Naive thymus-derived CD4-positive, alpha-beta T cell (primary cell): ENCODE measurements at regions of chr7 and their contacts with region 1.

Region 1: GRCh38 chr7:39623018-39623731 is at the start of gene RALA:
- DNase-seq: peak; percentile 78 to 90 (median 86)
- ATAC-seq: peak; percentile 96
- H3K4me3 ChIP-seq: peak within 1 kb of the TSS; percentile 77
- H3K4me3 Mint-ChIP-seq: peak within 1 kb of the TSS; percentile 88 to 98 (median 94)
- H3K27ac ChIP-seq: peak within 1 kb of the TSS; percentile 82
- H3K27ac Mint-ChIP-seq: peak within 1 kb of the TSS; percentile 91 to 98 (median 97)
- H3K4me1 ChIP-seq: peaks cover 22 to 26% of the 10 kb centered on the region in 2 donors
- H3K4me1 Mint-ChIP-seq: peaks cover 39 to 55% (median 52%) of the 10 kb centered on the region in 7 donors
- H3K27me3 ChIP-seq: no peaks in the 10 kb centered on the region
- H3K27me3 Mint-ChIP-seq: peaks cover 0 to 6% (median 0%) of the 10 kb centered on the region in 5 donors
- total RNA-seq, gene RALA: 24.8 to 48.2 (median 32.8) TPM

Region 2: GRCh38 chr7:37901236-37901827 is 1721.8 kb before region 1 on chr7:
- CTCF ChIA-PET with region 1: no interaction called
- POLR2A ChIA-PET with region 1: no interaction called
- intact Hi-C with region 1: no loop called
- DNase-seq: no peak
- ATAC-seq: no peak
- H3K4me3 ChIP-seq: no peak overlapping the region
- H3K4me3 Mint-ChIP-seq: no peak overlapping the region
- H3K27ac ChIP-seq: no peak overlapping the region
- H3K27ac Mint-ChIP-seq: no peak overlapping the region
- H3K4me1 ChIP-seq: no peaks in the 10 kb centered on the region
- H3K4me1 Mint-ChIP-seq: no peaks in the 10 kb centered on the region
- H3K27me3 ChIP-seq: no peaks in the 10 kb centered on the region
- H3K27me3 Mint-ChIP-seq: peaks cover 5 to 17% (median 9%) of the 10 kb centered on the region in 5 donors

Region 3: DNA sequence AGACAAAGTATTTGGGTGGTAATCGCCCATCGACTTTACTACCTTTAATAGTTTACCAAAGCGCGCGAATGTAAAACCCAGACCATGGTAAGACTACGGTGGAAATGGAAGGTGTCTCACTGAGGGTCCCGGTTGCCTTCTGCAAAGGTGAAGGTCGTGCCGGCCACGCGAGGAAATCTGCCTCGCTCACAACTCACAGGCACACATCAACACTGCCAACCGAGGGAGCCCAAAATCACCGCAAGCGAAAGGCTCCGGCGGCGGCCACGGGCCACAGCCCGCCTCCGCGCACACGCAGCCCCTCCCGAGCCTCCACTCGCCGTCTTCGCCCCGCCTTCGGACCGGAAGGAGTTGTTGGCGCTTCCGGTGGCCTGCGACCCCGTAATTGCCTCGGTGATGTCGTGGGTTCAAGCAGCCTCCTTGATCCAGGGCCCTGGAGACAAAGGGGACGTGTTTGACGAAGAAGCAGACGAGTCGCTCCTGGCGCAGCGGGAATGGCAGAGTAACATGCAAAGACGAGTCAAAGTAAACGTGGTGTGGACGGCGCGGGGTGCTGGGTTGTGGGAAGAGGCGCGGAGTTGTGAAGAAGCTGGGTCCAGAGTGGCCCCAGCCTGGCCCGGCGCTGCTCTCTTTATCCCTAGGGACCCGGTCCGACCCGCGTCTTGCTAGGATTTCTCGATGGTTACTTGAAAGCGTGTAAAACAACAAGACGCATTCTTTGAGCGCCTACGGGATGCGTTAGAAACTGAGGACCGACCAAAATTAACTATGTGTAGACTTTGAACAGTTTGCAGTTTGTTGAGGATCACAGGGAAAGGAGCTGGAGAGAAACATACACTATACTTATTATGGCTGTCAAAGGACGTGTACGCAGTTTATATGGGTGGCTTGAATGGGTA is 56.9 kb before region 1 on chr7 and contains the start of gene YAE1:
- CTCF ChIA-PET with region 1: no interaction called
- POLR2A ChIA-PET with region 1: no interaction called
- intact Hi-C with region 1: loop called (anchors 1 kb)
- DNase-seq: peak; percentile 63 to 81 (median 75)
- ATAC-seq: peak; percentile 95
- H3K4me3 ChIP-seq: peak within 1 kb of the TSS; percentile 88
- H3K4me3 Mint-ChIP-seq: peak within 1 kb of the TSS; percentile 98 to 100 (median 99)
- H3K27ac ChIP-seq: peak within 1 kb of the TSS; percentile 81
- H3K27ac Mint-ChIP-seq: peak within 1 kb of the TSS; percentile 93 to 99 (median 96)
- H3K4me1 ChIP-seq: peaks cover 7 to 11% of the 10 kb centered on the region in 2 donors
- H3K4me1 Mint-ChIP-seq: peaks cover 13 to 50% (median 25%) of the 10 kb centered on the region in 7 donors
- H3K27me3 ChIP-seq: no peaks in the 10 kb centered on the region
- H3K27me3 Mint-ChIP-seq: peaks cover 0 to 15% (median 0%) of the 10 kb centered on the region in 5 donors
- total RNA-seq, gene YAE1: 10.2 to 34.2 (median 15.3) TPM

Region 4: DNA sequence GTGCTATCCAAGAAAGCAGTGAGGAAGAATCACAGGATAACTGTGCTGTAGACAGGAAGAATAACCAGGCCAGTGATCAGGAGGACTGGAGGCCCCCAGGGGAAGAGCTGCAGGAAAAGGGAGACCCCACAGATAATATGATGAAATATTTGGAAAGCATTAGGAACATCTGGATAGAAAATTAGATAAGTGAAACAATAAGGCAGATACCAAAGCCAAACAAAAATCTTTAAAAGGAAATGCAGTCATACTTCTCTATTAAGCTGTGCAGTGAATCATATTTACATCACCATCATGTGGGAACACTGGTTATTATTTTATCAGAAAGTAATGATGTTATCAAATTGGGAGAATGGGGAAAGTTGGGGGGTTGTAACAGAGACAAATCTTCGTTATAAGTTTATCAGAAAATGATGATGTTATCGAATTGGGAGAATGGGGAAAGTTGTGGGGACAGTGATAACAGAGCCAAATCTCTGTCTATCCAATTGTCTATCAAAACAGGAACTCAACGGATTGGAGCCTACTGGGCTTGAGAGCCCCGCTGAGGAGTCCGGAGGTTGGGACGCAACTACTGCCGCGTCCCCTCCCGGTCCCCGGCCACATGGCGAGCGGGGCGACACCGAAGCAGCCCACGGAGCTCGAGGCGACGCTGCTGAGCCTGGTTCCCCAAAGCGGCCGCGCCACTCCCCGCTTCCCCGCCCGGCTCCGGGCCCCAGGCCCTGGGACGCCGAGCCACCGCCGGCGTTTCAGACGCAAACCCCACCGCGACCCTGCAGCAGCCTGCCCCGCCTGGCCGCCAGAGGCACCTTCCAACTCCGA is 13.9 kb before region 1 on chr7:
- CTCF ChIA-PET with region 1: interaction called, 11 read pairs
- POLR2A ChIA-PET with region 1: interaction called, 23 read pairs
- intact Hi-C with region 1: loop called in 1 of 2 experiments (anchors 2 kb)
- DNase-seq: peak in 4 of 9 donors; percentile 15 to 21 (median 18)
- ATAC-seq: peak; percentile 68
- H3K4me3 ChIP-seq: peak overlapping the region; percentile 22
- H3K4me3 Mint-ChIP-seq: peak overlapping the region; percentile 64 to 87 (median 76)
- H3K27ac ChIP-seq: no peak overlapping the region
- H3K27ac Mint-ChIP-seq: peak overlapping the region in 8 of 9 donors; percentile 13 to 81 (median 75)
- H3K4me1 ChIP-seq: peaks cover 0 to 22% of the 10 kb centered on the region in 2 donors
- H3K4me1 Mint-ChIP-seq: peaks cover 15 to 64% (median 56%) of the 10 kb centered on the region in 7 donors
- H3K27me3 ChIP-seq: no peaks in the 10 kb centered on the region
- H3K27me3 Mint-ChIP-seq: peaks cover 0 to 28% (median 19%) of the 10 kb centered on the region in 5 donors

Region 5: GRCh38 chr7:39678930-39679709 is 55.9 kb after region 1 on chr7:
- CTCF ChIA-PET with region 1: no interaction called
- POLR2A ChIA-PET with region 1: no interaction called
- intact Hi-C with region 1: loop called in 1 of 2 experiments (anchors 5 kb)
- DNase-seq: no peak
- ATAC-seq: no peak
- H3K4me3 ChIP-seq: no peak overlapping the region
- H3K4me3 Mint-ChIP-seq: no peak overlapping the region
- H3K27ac ChIP-seq: no peak overlapping the region
- H3K27ac Mint-ChIP-seq: peak overlapping the region in 1 of 9 donors; percentile 54
- H3K4me1 ChIP-seq: peaks cover 0 to 4% of the 10 kb centered on the region in 2 donors
- H3K4me1 Mint-ChIP-seq: peaks cover 9 to 65% (median 56%) of the 10 kb centered on the region in 7 donors
- H3K27me3 ChIP-seq: no peaks in the 10 kb centered on the region
- H3K27me3 Mint-ChIP-seq: no peaks in the 10 kb centered on the region

Region 6: GRCh38 chr7:39948956-39949928 is 326.1 kb after region 1 on chr7:
- CTCF ChIA-PET with region 1: no interaction called
- POLR2A ChIA-PET with region 1: interaction called, 5 read pairs
- intact Hi-C with region 1: loop called (anchors 1 kb)
- DNase-seq: peak; percentile 91 to 100 (median 99)
- ATAC-seq: peak; percentile 85
- H3K4me3 ChIP-seq: peak overlapping the region; percentile 58
- H3K4me3 Mint-ChIP-seq: peak overlapping the region; percentile 90 to 100 (median 96)
- H3K27ac ChIP-seq: peak overlapping the region; percentile 99
- H3K27ac Mint-ChIP-seq: peak overlapping the region; percentile 98 to 100 (median 99)
- H3K4me1 ChIP-seq: peaks cover 21% of the 10 kb centered on the region in 2 donors
- H3K4me1 Mint-ChIP-seq: peaks cover 22 to 48% (median 37%) of the 10 kb centered on the region in 7 donors
- H3K27me3 ChIP-seq: no peaks in the 10 kb centered on the region
- H3K27me3 Mint-ChIP-seq: peaks cover 0 to 10% (median 0%) of the 10 kb centered on the region in 5 donors